GM10248 (cell line): ENCODE measurements at regions of chr2 and their contacts with region 1.

Region 1: GRCh38 chr2:191626497-191627151 is 51.3 kb upstream of the NABP1 start:
- DNase-seq: no peak
- CTCF ChIP-seq: no peak

Region 2: GRCh38 chr2:191614764-191615163 is 11.9 kb before region 1 on chr2:
- CTCF ChIA-PET with region 1: interaction called, 11 read pairs
- POLR2A ChIA-PET with region 1: no interaction called
- DNase-seq: no peak
- CTCF ChIP-seq: no peak

Region 3: DNA sequence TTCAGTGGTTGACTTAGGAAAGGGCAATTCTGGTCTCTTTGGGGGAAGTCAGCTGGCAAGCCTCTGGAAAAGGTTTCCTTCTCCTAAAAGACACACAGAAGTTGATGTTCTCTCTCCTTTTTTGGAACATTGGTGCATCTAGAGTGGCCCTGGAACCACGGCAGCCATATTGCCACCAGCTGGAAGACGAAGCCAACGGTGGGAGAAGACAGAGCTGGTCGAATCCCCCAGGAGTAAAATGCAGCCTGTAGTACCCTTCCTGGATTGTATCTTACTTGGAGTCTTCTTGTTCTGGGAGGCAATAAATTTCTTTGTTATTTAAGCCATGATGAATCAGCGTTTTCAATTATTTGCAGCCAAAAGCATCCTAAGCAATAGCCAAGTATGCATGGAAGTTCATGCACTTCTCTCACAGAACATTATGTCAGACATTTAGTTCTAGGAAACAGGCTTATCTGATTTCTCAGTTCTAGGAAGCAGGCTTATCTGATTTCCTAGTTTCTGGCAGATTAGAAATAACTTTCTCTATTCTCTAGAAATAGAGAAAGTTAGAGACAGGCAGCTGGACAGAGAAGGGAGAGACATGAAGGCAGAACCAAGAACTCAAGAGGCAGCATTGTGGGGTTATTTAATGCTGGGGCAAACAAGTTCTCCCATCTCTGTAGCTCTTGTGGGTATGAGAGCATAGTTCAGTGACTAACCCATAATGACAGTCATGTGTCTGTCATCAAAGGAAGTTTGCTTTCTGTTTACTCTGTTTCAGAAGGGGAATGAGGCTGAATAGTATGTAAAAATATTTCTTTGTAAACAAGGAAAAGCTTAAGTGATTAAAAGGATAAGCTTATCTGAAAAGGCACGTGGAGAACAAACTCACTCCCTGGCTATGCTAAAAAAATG is 10.8 kb after region 1 on chr2:
- CTCF ChIA-PET with region 1: interaction called, 16 read pairs
- POLR2A ChIA-PET with region 1: no interaction called
- DNase-seq: peak; percentile 32
- CTCF ChIP-seq: no peak